Activated CD4-positive, alpha-beta T cell treated with anti-CD3 and anti-CD28 coated beads for 36 hours (primary cell): ENCODE measurements at regions of chr3 and their contacts with region 1.

Region 1: GRCh38 chr3:112734718-112735350 is 93.9 kb upstream of the CCDC80 start:
- DNase-seq: peak; percentile 78
- ATAC-seq: peak; percentile 57
- H3K4me3 Mint-ChIP-seq: no peak overlapping the region
- H3K27ac Mint-ChIP-seq: no peak overlapping the region
- H3K4me1 Mint-ChIP-seq: peaks cover 48% of the 10 kb centered on the region
- H3K27me3 Mint-ChIP-seq: no peaks in the 10 kb centered on the region

Region 2: DNA sequence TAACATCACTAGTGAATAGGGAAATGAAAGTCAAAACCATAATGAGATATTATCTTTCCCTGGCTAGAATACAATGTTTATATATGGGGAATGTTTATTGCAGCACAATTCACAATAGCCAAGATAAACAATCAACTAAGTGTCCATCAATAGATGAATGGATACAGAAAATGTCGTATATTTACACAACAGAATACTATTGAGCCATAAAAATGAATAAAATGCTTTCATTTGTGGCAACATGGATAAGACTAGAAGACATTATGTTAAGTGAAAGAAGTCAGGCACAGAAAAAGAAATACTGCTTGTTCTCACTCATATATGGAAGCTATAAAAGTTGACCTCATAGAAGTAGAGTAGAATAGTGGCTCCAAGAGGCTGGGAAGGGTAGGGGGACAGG is 506.0 kb before region 1 on chr3:
- CTCF ChIA-PET with region 1: no interaction called
- POLR2A ChIA-PET with region 1: no interaction called
- intact Hi-C with region 1: no loop called
- DNase-seq: no peak
- ATAC-seq: no peak
- H3K4me3 Mint-ChIP-seq: no peak overlapping the region
- H3K27ac Mint-ChIP-seq: no peak overlapping the region
- H3K4me1 Mint-ChIP-seq: peaks cover 10% of the 10 kb centered on the region
- H3K27me3 Mint-ChIP-seq: peaks cover 3% of the 10 kb centered on the region

Region 3: GRCh38 chr3:112635671-112636070 is 99.2 kb before region 1 on chr3:
- CTCF ChIA-PET with region 1: interaction called, 12 read pairs
- POLR2A ChIA-PET with region 1: no interaction called
- intact Hi-C with region 1: no loop called
- DNase-seq: no peak
- ATAC-seq: peak; percentile 26
- H3K4me3 Mint-ChIP-seq: no peak overlapping the region
- H3K27ac Mint-ChIP-seq: no peak overlapping the region
- H3K4me1 Mint-ChIP-seq: peaks cover 4% of the 10 kb centered on the region
- H3K27me3 Mint-ChIP-seq: no peaks in the 10 kb centered on the region

Region 4: DNA sequence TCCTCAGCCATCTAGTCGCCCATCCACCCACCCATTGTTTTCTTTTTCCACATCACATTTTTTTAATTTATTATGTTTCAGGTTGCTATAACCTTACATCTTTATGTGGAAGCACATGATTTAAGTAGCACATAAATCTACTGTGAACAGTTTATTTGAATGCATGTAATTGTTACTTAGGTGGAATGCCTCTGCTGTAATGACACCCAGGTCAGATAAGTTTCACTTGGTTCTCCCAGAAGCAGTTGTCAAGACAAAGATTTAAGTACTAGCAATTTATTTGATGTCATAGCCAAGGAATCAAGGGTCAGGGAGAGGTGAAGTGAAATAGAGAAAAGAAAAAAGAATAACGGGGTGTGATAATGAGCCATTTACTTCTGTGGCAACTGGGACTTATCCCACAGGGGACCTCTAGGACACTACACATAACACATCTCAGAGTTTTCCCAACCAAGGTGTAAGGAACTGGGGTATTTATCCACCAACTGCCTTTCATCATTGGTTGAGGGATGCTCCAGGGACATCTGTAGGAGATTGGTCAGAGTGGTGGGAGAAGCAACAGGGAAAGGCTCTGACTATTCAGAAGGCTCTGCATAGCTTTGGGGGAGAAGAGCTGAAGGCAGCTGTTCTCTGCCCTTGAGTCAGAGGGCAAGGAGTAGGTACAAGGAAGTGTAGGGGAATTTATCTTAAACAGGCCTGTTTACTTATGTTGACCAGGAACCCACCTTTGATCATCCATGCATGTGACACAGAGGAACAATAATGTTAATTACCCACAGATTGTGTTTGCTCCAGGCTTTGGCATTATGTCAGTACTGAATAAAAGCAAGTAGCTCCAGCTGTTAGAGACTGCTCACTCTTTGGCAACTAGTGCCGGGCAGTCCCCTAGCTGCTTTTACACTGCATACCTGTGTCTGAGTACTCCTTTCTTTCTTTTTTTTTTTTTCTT is 17.0 kb after region 1 on chr3:
- CTCF ChIA-PET with region 1: interaction called, 56 read pairs
- POLR2A ChIA-PET with region 1: no interaction called
- intact Hi-C with region 1: no loop called
- DNase-seq: no peak
- ATAC-seq: no peak
- H3K4me3 Mint-ChIP-seq: no peak overlapping the region
- H3K27ac Mint-ChIP-seq: no peak overlapping the region
- H3K4me1 Mint-ChIP-seq: peaks cover 10% of the 10 kb centered on the region
- H3K27me3 Mint-ChIP-seq: no peaks in the 10 kb centered on the region

Region 5: GRCh38 chr3:112973325-112974177 is 238.7 kb after region 1 on chr3:
- CTCF ChIA-PET with region 1: interaction called, 83 read pairs
- POLR2A ChIA-PET with region 1: no interaction called
- intact Hi-C with region 1: no loop called
- DNase-seq: peak; percentile 69
- ATAC-seq: peak; percentile 87
- H3K4me3 Mint-ChIP-seq: peak overlapping the region; percentile 73
- H3K27ac Mint-ChIP-seq: peak overlapping the region; percentile 91
- H3K4me1 Mint-ChIP-seq: peaks cover 87% of the 10 kb centered on the region
- H3K27me3 Mint-ChIP-seq: peaks cover 2% of the 10 kb centered on the region

Region 6: GRCh38 chr3:113002679-113003078 is 267.8 kb after region 1 on chr3:
- CTCF ChIA-PET with region 1: interaction called, 13 read pairs
- POLR2A ChIA-PET with region 1: interaction called, 6 read pairs
- intact Hi-C with region 1: no loop called
- DNase-seq: peak; percentile 77
- ATAC-seq: peak; percentile 77
- H3K4me3 Mint-ChIP-seq: no peak overlapping the region
- H3K27ac Mint-ChIP-seq: peak overlapping the region; percentile 89
- H3K4me1 Mint-ChIP-seq: peaks cover 83% of the 10 kb centered on the region
- H3K27me3 Mint-ChIP-seq: no peaks in the 10 kb centered on the region